ENCODE measurements at regions of chr9 and their contacts with region 1.

Region 1: DNA sequence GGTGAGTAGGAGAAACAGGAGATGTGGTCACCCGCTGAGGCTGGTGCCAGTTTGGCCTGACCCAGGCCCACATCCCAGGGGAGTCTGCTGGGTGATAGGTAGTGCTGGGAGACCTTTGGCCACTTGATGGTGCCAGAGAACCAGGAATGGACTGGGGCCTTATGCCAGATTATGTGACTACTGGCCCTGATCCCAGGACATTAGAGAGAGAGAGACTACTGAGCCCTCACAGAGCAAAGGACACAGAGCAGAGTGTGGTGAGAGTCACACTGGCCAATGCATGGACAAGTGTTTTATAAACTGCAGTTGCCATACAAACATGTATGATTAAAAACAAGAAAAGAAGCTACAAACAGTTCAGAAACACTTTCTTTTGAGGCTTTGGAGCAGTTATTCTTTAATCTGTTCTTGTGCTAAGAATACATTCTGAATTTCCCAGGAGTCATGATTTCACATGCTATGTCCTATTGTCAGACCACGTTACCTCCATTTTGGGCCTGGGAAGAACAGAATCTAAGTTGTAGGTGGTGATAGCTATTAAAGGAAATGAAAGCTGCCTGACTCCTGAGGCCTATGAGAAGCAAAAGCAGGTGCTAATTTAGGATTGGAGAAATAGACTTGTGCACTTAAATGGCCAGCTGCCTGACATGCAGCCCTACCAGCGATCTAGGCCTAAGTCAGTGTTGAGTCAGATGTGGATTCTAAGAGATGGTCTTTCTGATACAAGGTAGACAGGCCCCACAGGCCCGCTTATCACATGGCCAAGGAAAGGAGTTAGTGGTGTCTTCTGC is 32.6 kb upstream of the TMOD1 start:
- DNase-seq: peak in 10 of 14 experiments; percentile 2 to 55 (median 8)
- ATAC-seq: peak; percentile 32
- H3K4me3 ChIP-seq: no peak overlapping the region
- H3K4me3 Mint-ChIP-seq: no peak overlapping the region
- H3K27ac ChIP-seq: no peak overlapping the region
- H3K27ac Mint-ChIP-seq: no peak overlapping the region
- H3K4me1 ChIP-seq: no peaks in the 10 kb centered on the region
- H3K4me1 Mint-ChIP-seq: no peaks in the 10 kb centered on the region
- H3K27me3 ChIP-seq: no peaks in the 10 kb centered on the region
- H3K27me3 Mint-ChIP-seq: no peaks in the 10 kb centered on the region
- CTCF ChIP-seq: no peak

Region 2: GRCh38 chr9:97440160-97440559 is 28.7 kb before region 1 on chr9:
- CTCF ChIA-PET with region 1: no interaction called
- POLR2A ChIA-PET with region 1: no interaction called
- intact Hi-C with region 1: no loop called
- DNase-seq: no peak
- ATAC-seq: no peak
- H3K4me3 ChIP-seq: no peak overlapping the region
- H3K4me3 Mint-ChIP-seq: no peak overlapping the region
- H3K27ac ChIP-seq: no peak overlapping the region
- H3K27ac Mint-ChIP-seq: no peak overlapping the region
- H3K4me1 ChIP-seq: no peaks in the 10 kb centered on the region
- H3K4me1 Mint-ChIP-seq: no peaks in the 10 kb centered on the region
- H3K27me3 ChIP-seq: no peaks in the 10 kb centered on the region
- H3K27me3 Mint-ChIP-seq: no peaks in the 10 kb centered on the region
- CTCF ChIP-seq: no peak

Region 3: DNA sequence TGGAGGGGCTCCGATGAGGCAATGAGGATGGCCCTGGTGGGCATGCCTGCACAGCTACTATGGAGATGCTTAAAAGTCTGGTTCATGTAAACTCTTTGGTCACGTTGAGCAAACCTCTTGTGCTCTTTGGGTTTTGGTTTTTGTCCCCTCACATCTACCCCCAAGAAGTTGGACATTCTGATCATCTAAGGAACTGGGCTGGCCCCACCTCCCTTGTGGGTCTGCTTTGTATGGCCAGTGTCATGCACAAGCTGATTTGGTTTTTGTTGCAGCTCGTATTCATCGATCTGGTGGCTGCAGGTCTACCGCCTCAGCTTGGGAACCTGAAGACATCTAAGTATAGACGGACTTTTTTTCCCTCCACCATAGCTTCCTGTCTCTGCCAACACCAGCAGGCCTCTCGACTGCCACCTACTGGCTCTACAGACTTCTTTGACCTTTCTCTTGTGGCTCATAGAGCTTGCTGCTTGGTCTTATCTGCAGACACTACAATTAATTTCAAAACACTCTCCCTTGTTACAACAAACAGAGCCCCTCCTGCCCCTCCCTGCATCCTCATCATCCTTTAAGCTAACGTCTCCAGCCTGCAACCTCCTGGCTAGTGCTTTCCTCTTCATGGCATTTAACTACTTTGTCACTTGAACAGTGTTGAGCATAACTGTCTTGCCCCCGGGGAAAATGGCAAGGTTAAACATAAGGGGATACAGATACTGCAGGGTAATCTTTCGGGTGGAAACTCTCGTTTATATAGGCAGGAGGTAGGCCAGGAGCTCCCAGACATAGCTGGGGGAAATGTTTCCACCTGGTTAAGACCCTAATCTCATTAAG is 129.8 kb after region 1 on chr9:
- CTCF ChIA-PET with region 1: interaction called, 5 read pairs
- POLR2A ChIA-PET with region 1: no interaction called
- intact Hi-C with region 1: loop called (anchors 1 kb)
- DNase-seq: peak; percentile 46 to 85 (median 60)
- ATAC-seq: peak; percentile 96
- H3K4me3 ChIP-seq: no peak overlapping the region
- H3K4me3 Mint-ChIP-seq: peak overlapping the region; percentile 40
- H3K27ac ChIP-seq: no peak overlapping the region
- H3K27ac Mint-ChIP-seq: no peak overlapping the region
- H3K4me1 ChIP-seq: peaks cover 4% of the 10 kb centered on the region
- H3K4me1 Mint-ChIP-seq: peaks cover 7% of the 10 kb centered on the region
- H3K27me3 ChIP-seq: no peaks in the 10 kb centered on the region
- H3K27me3 Mint-ChIP-seq: no peaks in the 10 kb centered on the region
- CTCF ChIP-seq: peak; percentile 87

Region 4: GRCh38 chr9:97615439-97616072 is 146.7 kb after region 1 on chr9:
- CTCF ChIA-PET with region 1: interaction called, 3 read pairs
- POLR2A ChIA-PET with region 1: no interaction called
- intact Hi-C with region 1: loop called (anchors 1 to 5 kb)
- DNase-seq: peak; percentile 15 to 76 (median 44)
- ATAC-seq: peak; percentile 65
- H3K4me3 ChIP-seq: no peak overlapping the region
- H3K4me3 Mint-ChIP-seq: no peak overlapping the region
- H3K27ac ChIP-seq: no peak overlapping the region
- H3K27ac Mint-ChIP-seq: no peak overlapping the region
- H3K4me1 ChIP-seq: no peaks in the 10 kb centered on the region
- H3K4me1 Mint-ChIP-seq: no peaks in the 10 kb centered on the region
- H3K27me3 ChIP-seq: no peaks in the 10 kb centered on the region
- H3K27me3 Mint-ChIP-seq: no peaks in the 10 kb centered on the region
- CTCF ChIP-seq: peak; percentile 83

Region 5: DNA sequence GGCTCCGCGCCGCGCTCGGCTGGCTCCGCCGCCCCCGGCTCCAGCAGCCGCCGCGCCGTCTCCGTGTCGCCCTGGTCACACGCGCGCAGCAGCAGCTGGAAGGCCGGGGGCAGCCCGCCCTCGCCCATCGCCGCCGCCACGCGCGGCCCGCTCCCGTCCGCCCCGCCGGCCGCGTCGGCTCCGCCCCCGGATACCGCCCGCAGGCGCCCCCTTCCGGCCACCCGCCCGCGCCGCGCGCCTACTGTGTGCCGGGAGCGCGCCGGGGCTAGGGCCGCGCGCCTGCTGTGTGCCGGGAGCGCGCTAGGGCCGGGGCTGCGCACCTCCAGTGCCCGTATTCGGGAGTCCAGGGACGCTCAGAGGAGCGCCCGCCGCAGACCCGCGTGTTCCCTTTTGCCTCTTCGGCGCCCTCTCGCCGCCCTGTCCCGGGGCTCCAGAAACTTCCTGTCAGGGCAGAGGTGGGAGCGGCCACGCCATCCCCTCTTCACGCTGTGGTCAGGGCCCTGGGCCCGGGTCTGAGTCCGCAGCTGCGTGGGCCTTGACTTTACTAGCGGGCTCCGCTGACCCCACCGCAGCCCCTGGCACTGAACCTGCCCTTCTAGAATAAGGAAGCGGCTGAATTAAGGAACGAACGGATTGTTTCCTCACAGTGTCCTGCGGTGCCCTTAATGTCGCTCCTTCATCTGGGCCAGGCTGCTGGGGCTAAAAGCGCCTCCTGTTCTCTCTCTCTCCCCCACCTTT is 1327.7 kb after region 1 on chr9 and contains the start of gene ANKS6:
- CTCF ChIA-PET with region 1: no interaction called
- POLR2A ChIA-PET with region 1: no interaction called
- intact Hi-C with region 1: no loop called
- DNase-seq: peak; percentile 64 to 93 (median 82)
- ATAC-seq: peak; percentile 91
- H3K4me3 ChIP-seq: peak within 1 kb of the TSS; percentile 80
- H3K4me3 Mint-ChIP-seq: peak within 1 kb of the TSS; percentile 94
- H3K27ac ChIP-seq: peak within 1 kb of the TSS; percentile 23 to 31
- H3K27ac Mint-ChIP-seq: peak within 1 kb of the TSS; percentile 72
- H3K4me1 ChIP-seq: peaks cover 22% of the 10 kb centered on the region
- H3K4me1 Mint-ChIP-seq: peaks cover 37% of the 10 kb centered on the region
- H3K27me3 ChIP-seq: no peaks in the 10 kb centered on the region
- H3K27me3 Mint-ChIP-seq: no peaks in the 10 kb centered on the region
- CTCF ChIP-seq: peak; percentile 32
- total RNA-seq, gene ANKS6: 11.8 to 12.2 TPM

Measured in CD4-positive, alpha-beta T cell (primary cell).